ENCODE measurements at regions of chr10 and their contacts with region 1.

Region 1: GRCh38 chr10:113309791-113310190 is 243.1 kb upstream of the HABP2 start:
- DNase-seq: no peak
- H3K4me3 ChIP-seq: peak overlapping the region in 2 of 3 experiments; percentile 7 to 43
- H3K4me3 Mint-ChIP-seq: peak overlapping the region in 1 of 2 donors; percentile 72
- H3K27ac ChIP-seq: peak overlapping the region in 1 of 2 donors; percentile 7
- H3K27ac Mint-ChIP-seq: peak overlapping the region in 5 of 7 donors; percentile 50 to 85 (median 78)
- H3K4me1 ChIP-seq: peaks cover 22 to 39% of the 10 kb centered on the region in 2 donors
- H3K4me1 Mint-ChIP-seq: peaks cover 25% of the 10 kb centered on the region
- H3K27me3 ChIP-seq: no peaks in the 10 kb centered on the region
- H3K27me3 Mint-ChIP-seq: peaks cover 0 to 3% (median 0%) of the 10 kb centered on the region in 3 donors
- CTCF ChIP-seq: no peak

Region 2: DNA sequence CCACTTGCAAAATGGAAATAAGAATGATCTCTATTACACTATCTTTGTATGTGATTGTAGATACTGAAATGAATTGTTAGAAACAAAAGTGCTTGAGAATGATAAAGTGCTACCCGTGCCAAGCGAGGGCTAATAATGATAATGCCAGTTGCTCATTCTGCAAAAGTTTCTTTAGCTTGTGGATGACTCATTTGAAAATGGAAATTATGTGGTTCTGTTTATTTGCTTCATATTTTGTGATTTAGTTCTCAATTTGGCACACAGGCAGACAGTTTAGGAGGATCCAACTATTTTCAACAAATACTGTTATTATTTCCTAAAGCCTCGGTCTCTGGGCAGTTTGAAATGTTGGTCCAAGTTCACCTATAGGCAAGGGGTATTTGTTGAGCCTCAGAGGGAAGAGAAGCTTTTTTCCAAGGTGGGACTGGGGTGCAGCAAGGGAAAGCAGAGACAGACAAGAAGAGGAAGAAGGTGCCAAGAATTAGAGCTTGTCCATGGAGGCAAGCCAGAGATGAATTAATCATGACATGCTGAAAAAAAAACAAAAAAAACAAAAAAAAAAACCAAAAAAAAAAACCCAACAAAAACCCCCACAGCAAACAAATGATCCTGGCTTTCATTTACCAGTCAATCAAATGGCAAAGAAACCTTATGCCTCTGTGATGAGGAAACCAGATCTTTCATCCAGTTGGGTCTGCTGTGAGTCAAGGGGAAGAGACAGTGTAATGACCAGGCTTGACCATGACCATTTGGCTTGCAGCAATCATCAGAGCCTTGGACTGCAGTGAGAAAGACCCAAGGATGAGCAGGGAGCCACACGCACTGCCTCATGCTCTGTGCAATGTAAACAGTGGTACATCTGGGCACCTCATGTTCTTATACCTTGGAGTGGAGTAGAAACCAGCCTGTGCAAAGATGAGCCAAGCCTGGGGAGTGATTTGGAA is 41.9 kb before region 1 on chr10:
- intact Hi-C with region 1: loop called in 1 of 2 experiments (anchors 5 kb)
- DNase-seq: peak; percentile 50 to 87 (median 63)
- H3K4me3 ChIP-seq: no peak overlapping the region
- H3K4me3 Mint-ChIP-seq: peak overlapping the region in 1 of 2 donors; percentile 73
- H3K27ac ChIP-seq: peak overlapping the region in 1 of 2 donors; percentile 78
- H3K27ac Mint-ChIP-seq: peak overlapping the region; percentile 68 to 95 (median 89)
- H3K4me1 ChIP-seq: peaks cover 39 to 58% of the 10 kb centered on the region in 2 donors
- H3K4me1 Mint-ChIP-seq: peaks cover 45% of the 10 kb centered on the region
- H3K27me3 ChIP-seq: no peaks in the 10 kb centered on the region
- H3K27me3 Mint-ChIP-seq: peaks cover 0 to 7% (median 0%) of the 10 kb centered on the region in 3 donors
- CTCF ChIP-seq: no peak

Measured in CD14-positive monocyte (primary cell).